AG04450 (cell line): ENCODE measurements at regions of chr11 and their contacts with region 1.

Region 1: DNA sequence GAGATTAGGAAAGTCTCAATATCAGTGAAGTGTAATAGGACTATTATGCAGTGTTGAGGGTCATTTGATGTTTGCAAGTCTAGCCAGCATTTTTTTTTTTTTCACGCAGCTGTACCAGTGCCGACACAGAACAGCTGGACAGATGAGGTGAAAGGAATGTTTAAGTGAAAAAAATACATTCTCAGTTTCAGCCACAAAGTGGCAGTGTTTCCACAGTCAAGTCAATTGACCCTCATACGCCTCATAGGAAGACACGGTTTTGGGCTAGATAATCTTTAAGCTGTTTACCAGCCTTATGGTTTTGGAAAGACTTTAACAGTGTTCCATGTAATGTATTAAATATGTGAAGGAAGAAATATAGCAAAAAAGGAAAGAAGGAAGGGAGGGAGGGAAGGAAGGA is 349.9 kb upstream of the ANO3 start:
- DNase-seq: peak; percentile 62
- H3K4me3 ChIP-seq: no peak overlapping the region
- H3K27ac ChIP-seq: no peak overlapping the region
- H3K27me3 ChIP-seq: no peaks in the 10 kb centered on the region
- CTCF ChIP-seq: peak; percentile 63

Region 2: DNA sequence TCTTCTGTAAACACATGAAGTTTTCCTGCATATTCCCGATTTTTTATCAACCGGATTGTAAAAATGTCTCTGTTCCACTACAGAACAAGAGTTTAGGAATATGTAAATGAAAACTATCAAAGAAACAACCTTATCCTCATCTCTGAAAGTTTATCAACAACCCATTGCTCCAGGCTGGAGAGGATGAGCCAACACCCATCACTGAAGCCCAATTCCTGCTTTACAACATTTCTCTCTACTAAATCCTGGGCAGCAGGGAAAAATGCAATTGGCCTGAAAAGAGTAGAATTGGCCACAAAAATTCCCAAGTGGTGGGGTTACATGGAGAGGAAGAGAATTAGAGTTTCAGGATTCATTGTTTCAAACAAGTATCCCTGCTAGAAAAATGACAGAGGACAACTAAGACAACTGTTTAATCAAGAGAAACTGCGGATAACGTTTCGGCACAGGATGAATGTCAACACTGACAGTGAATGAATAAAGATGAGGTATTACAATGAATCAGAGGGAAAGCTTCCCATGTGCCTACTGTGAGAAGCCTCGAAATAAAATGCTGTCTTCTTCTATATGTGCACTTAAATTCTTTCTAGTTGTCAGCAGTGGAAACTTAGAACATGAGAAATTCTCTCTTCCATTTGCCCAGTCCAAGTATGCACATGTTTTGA is 32.6 kb after region 1 on chr11:
- CTCF ChIA-PET with region 1: interaction called, 22 read pairs
- POLR2A ChIA-PET with region 1: no interaction called
- DNase-seq: no peak
- H3K4me3 ChIP-seq: no peak overlapping the region
- H3K27ac ChIP-seq: no peak overlapping the region
- H3K27me3 ChIP-seq: no peaks in the 10 kb centered on the region
- CTCF ChIP-seq: no peak

Region 3: DNA sequence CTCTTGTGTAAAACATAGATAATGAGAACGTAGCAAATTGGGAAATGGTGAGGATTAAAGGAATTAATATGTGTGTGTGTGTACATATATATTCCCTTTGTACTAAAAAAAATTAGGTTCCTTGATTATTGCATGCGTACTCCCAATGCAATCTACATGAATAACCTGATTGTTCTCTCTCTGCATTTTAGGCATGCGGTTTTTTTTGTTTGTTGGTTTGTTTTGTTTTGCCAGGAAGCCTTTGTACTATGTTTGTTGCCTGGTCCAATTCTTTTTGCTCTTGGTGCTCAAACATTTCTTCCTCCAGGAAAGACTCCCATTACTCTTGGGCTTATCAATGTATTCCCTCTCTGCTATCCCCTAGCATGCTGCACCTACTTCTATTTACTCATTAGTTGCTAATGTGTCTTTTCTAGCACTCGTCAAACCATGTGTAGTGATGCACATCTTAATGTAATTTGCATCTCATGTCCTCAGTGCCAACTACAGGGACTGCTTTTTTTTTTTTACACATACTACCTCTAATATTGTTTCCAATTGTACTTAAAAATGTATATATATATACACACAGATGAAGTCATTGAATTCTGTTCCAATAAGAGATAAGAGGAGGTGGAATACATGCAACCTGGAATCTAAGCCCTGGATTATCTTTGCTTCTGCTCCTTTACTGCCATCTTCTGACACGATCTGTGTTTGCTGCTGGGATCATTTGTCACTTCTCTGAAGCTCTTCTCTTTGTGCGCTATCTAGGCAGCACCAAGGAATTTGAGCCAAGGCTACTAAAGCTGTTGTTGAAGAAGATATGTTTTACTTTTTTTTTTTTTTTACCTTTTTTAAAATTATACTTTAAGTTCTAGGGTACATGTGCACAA is 152.7 kb after region 1 on chr11:
- CTCF ChIA-PET with region 1: interaction called, 105 read pairs
- POLR2A ChIA-PET with region 1: no interaction called
- DNase-seq: no peak
- H3K4me3 ChIP-seq: no peak overlapping the region
- H3K27ac ChIP-seq: no peak overlapping the region
- H3K27me3 ChIP-seq: no peaks in the 10 kb centered on the region
- CTCF ChIP-seq: peak; percentile 45

Region 4: GRCh38 chr11:26227296-26227695 is 245.3 kb after region 1 on chr11:
- CTCF ChIA-PET with region 1: interaction called, 140 read pairs
- POLR2A ChIA-PET with region 1: no interaction called
- DNase-seq: peak; percentile 71
- H3K4me3 ChIP-seq: peak overlapping the region; percentile 29
- H3K27ac ChIP-seq: peak overlapping the region; percentile 59
- H3K27me3 ChIP-seq: no peaks in the 10 kb centered on the region
- CTCF ChIP-seq: peak; percentile 58

Region 5: GRCh38 chr11:26268980-26269660 is 287.1 kb after region 1 on chr11:
- CTCF ChIA-PET with region 1: interaction called, 37 read pairs
- POLR2A ChIA-PET with region 1: no interaction called
- DNase-seq: no peak
- H3K4me3 ChIP-seq: no peak overlapping the region
- H3K27ac ChIP-seq: no peak overlapping the region
- H3K27me3 ChIP-seq: no peaks in the 10 kb centered on the region
- CTCF ChIP-seq: no peak

Region 6: GRCh38 chr11:26286472-26287066 is 304.6 kb after region 1 on chr11:
- CTCF ChIA-PET with region 1: interaction called, 26 read pairs
- POLR2A ChIA-PET with region 1: no interaction called
- DNase-seq: no peak
- H3K4me3 ChIP-seq: no peak overlapping the region
- H3K27ac ChIP-seq: no peak overlapping the region
- H3K27me3 ChIP-seq: no peaks in the 10 kb centered on the region
- CTCF ChIP-seq: peak; percentile 56